Naive thymus-derived CD4-positive, alpha-beta T cell (primary cell): ENCODE measurements at regions of chr12 and their contacts with region 1.

Region 1: GRCh38 chr12:104569346-104570173 is 112.8 kb downstream of the CHST11 start:
- DNase-seq: peak in 6 of 9 donors; percentile 7 to 41 (median 24)
- ATAC-seq: peak; percentile 91
- H3K4me3 ChIP-seq: peak overlapping the region; percentile 14
- H3K4me3 Mint-ChIP-seq: peak overlapping the region; percentile 18 to 76 (median 61)
- H3K27ac ChIP-seq: no peak overlapping the region
- H3K27ac Mint-ChIP-seq: peak overlapping the region; percentile 11 to 89 (median 45)
- H3K4me1 ChIP-seq: peaks cover 13 to 34% of the 10 kb centered on the region in 2 donors
- H3K4me1 Mint-ChIP-seq: peaks cover 33 to 72% (median 49%) of the 10 kb centered on the region in 7 donors
- H3K27me3 ChIP-seq: no peaks in the 10 kb centered on the region
- H3K27me3 Mint-ChIP-seq: no peaks in the 10 kb centered on the region

Region 2: GRCh38 chr12:104535369-104535768 is 34.2 kb before region 1 on chr12:
- CTCF ChIA-PET with region 1: no interaction called
- POLR2A ChIA-PET with region 1: no interaction called
- intact Hi-C with region 1: loop called in 1 of 2 experiments (anchors 5 kb)
- DNase-seq: no peak
- ATAC-seq: no peak
- H3K4me3 ChIP-seq: no peak overlapping the region
- H3K4me3 Mint-ChIP-seq: no peak overlapping the region
- H3K27ac ChIP-seq: no peak overlapping the region
- H3K27ac Mint-ChIP-seq: peak overlapping the region in 2 of 9 donors; percentile 6 to 16
- H3K4me1 ChIP-seq: peaks cover 0 to 5% of the 10 kb centered on the region in 2 donors
- H3K4me1 Mint-ChIP-seq: peaks cover 35 to 73% (median 62%) of the 10 kb centered on the region in 7 donors
- H3K27me3 ChIP-seq: no peaks in the 10 kb centered on the region
- H3K27me3 Mint-ChIP-seq: no peaks in the 10 kb centered on the region

Region 3: GRCh38 chr12:104604070-104604994 is 34.8 kb after region 1 on chr12:
- CTCF ChIA-PET with region 1: interaction called, 4 read pairs
- POLR2A ChIA-PET with region 1: no interaction called
- intact Hi-C with region 1: loop called in 1 of 2 experiments (anchors 2 kb)
- DNase-seq: peak in 5 of 9 donors; percentile 7 to 54 (median 13)
- ATAC-seq: peak; percentile 82
- H3K4me3 ChIP-seq: no peak overlapping the region
- H3K4me3 Mint-ChIP-seq: peak overlapping the region in 4 of 10 donors; percentile 23 to 66 (median 28)
- H3K27ac ChIP-seq: no peak overlapping the region
- H3K27ac Mint-ChIP-seq: peak overlapping the region in 8 of 9 donors; percentile 15 to 91 (median 43)
- H3K4me1 ChIP-seq: peaks cover 10 to 16% of the 10 kb centered on the region in 2 donors
- H3K4me1 Mint-ChIP-seq: peaks cover 37 to 79% (median 64%) of the 10 kb centered on the region in 7 donors
- H3K27me3 ChIP-seq: no peaks in the 10 kb centered on the region
- H3K27me3 Mint-ChIP-seq: no peaks in the 10 kb centered on the region

Region 4: GRCh38 chr12:105698075-105698474 is 1128.5 kb after region 1 on chr12:
- CTCF ChIA-PET with region 1: no interaction called
- POLR2A ChIA-PET with region 1: no interaction called
- intact Hi-C with region 1: no loop called
- DNase-seq: no peak
- ATAC-seq: no peak
- H3K4me3 ChIP-seq: no peak overlapping the region
- H3K4me3 Mint-ChIP-seq: no peak overlapping the region
- H3K27ac ChIP-seq: no peak overlapping the region
- H3K27ac Mint-ChIP-seq: no peak overlapping the region
- H3K4me1 ChIP-seq: no peaks in the 10 kb centered on the region
- H3K4me1 Mint-ChIP-seq: no peaks in the 10 kb centered on the region
- H3K27me3 ChIP-seq: no peaks in the 10 kb centered on the region
- H3K27me3 Mint-ChIP-seq: peaks cover 3 to 10% (median 8%) of the 10 kb centered on the region in 5 donors